Activated naive CD4-positive, alpha-beta T cell treated with anti-CD3 and anti-CD28 coated beads for 36 hours (primary cell): ENCODE measurements at regions of chr4 and their contacts with region 1.

Region 1: GRCh38 chr4:152535903-152536544 is at the start of gene FBXW7:
- DNase-seq: peak; percentile 100
- H3K4me3 Mint-ChIP-seq: peak within 1 kb of the TSS; percentile 87
- H3K27ac Mint-ChIP-seq: peak within 1 kb of the TSS; percentile 97
- H3K4me1 Mint-ChIP-seq: peaks cover 56% of the 10 kb centered on the region
- H3K27me3 Mint-ChIP-seq: no peaks in the 10 kb centered on the region
- total RNA-seq, gene FBXW7: 26.7 to 29.2 TPM

Region 2: GRCh38 chr4:151760712-151761527 is 775.1 kb before region 1 on chr4 and contains the start of gene GATB:
- CTCF ChIA-PET with region 1: no interaction called
- intact Hi-C with region 1: loop called (anchors 1 kb)
- DNase-seq: peak; percentile 95
- H3K4me3 Mint-ChIP-seq: peak within 1 kb of the TSS; percentile 99
- H3K27ac Mint-ChIP-seq: peak within 1 kb of the TSS; percentile 89
- H3K4me1 Mint-ChIP-seq: peaks cover 13% of the 10 kb centered on the region
- H3K27me3 Mint-ChIP-seq: no peaks in the 10 kb centered on the region
- total RNA-seq, gene GATB: 15.2 to 22.1 TPM

Region 3: GRCh38 chr4:152278505-152279233 is 257.4 kb before region 1 on chr4:
- CTCF ChIA-PET with region 1: no interaction called
- intact Hi-C with region 1: no loop called
- DNase-seq: peak; percentile 31
- H3K4me3 Mint-ChIP-seq: no peak overlapping the region
- H3K27ac Mint-ChIP-seq: no peak overlapping the region
- H3K4me1 Mint-ChIP-seq: peaks cover 27% of the 10 kb centered on the region
- H3K27me3 Mint-ChIP-seq: no peaks in the 10 kb centered on the region

Region 4: DNA sequence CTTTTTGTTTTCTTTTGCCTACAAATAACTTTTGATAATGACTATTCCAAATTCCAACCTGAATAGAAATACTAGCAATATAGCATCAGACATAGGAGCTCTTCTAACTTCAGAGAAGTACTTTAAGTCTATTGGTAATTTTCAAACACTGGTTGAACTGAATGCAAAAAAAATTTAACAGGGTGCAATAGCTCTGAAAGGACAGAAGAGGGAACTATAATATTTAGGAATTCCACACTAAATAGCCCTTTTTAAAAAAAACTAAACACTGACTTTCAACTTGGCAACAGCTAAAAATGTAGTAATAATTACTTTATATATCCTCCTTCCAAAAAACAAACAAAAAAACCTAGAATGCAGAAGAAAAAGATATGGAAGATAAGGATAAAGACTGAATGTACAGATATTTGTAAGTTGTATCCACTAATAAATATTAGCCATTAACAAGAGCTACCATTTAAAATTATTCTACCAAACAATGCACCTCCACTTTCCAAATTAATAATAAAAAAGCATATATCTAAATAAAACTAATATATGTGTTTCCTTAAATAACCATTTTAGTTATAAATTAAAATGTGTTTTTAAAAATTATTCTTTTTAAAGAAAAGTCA is 81.5 kb before region 1 on chr4:
- CTCF ChIA-PET with region 1: interaction called, 3 read pairs
- intact Hi-C with region 1: loop called (anchors 1 kb)
- DNase-seq: no peak
- H3K4me3 Mint-ChIP-seq: no peak overlapping the region
- H3K27ac Mint-ChIP-seq: no peak overlapping the region
- H3K4me1 Mint-ChIP-seq: peaks cover 32% of the 10 kb centered on the region
- H3K27me3 Mint-ChIP-seq: no peaks in the 10 kb centered on the region

Region 5: DNA sequence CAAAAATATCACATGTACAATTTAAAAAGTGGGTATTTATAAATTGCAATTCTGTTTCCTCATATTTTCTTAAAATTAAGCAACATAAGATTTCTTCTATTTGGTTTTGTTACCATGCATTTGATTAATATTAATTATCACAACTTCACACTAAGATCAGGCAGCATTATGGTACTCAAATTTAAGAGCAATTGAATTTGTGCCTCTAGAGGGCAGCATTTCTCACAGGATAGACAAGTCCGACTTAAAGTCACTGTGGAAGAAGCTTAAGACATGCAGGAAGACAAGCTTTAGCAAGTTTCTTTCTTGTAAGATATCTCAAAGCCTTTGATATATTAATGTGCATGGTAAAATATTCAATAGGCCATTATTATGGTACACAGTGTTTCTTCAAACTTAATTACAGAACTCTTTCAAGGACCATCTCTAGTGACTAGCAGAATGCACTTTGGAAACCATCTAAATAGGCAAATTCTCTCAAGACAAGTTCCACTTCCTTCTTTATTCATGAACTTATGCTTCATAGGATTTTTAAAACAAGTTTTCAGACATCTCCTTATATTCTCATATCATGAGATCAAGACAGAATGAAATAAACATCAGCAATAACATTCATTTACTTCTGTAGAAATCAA is 35.1 kb before region 1 on chr4:
- CTCF ChIA-PET with region 1: interaction called, 7 read pairs
- intact Hi-C with region 1: loop called (anchors 1 kb)
- DNase-seq: peak; percentile 79
- H3K4me3 Mint-ChIP-seq: no peak overlapping the region
- H3K27ac Mint-ChIP-seq: no peak overlapping the region
- H3K4me1 Mint-ChIP-seq: peaks cover 15% of the 10 kb centered on the region
- H3K27me3 Mint-ChIP-seq: no peaks in the 10 kb centered on the region

Region 6: GRCh38 chr4:152559641-152560040 is 23.6 kb after region 1 on chr4:
- CTCF ChIA-PET with region 1: interaction called, 10 read pairs
- intact Hi-C with region 1: loop called (anchors 1 kb)
- DNase-seq: no peak
- H3K4me3 Mint-ChIP-seq: no peak overlapping the region
- H3K27ac Mint-ChIP-seq: no peak overlapping the region
- H3K4me1 Mint-ChIP-seq: peaks cover 15% of the 10 kb centered on the region
- H3K27me3 Mint-ChIP-seq: no peaks in the 10 kb centered on the region

Region 7: DNA sequence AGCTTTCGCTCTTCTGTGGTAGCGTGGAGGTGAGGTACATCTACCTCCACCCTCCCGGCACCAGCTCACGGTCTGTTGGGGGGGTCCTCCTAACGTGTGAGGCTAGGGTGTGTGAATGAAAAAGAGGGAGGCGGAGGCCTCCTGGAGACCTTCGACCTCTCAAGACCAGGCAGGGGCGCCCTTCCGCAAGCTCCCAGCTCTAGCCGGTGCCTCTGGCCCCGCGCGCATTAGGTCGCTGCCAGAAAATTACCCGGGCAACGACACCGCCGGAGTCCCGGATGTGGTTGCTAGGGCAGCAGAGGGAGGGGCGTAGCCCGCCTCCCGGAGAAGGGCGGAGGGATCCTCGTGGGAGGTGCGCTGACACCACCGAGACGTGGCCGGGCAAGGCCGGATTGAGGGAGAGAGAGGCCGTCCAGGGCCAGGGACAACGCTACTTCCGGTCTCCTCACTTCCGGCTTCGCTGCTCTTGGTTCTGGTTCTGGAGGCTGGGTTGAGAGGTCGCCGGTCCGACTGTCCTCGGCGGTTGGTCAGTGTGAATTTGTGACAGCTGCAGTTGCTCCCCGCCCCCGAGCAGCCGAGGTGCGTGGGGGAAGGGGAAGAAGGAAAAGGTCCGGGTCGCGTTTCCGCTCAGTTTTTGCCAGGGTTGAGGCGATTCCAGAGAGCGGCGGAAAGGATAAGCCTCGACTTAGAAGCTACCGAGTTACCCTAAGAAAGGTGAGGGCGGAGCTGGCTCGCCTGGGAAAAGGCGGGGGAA is 243.7 kb after region 1 on chr4 and contains the starts of genes ARFIP1 and TIGD4:
- CTCF ChIA-PET with region 1: interaction called, 4 read pairs
- intact Hi-C with region 1: loop called (anchors 1 kb)
- DNase-seq: peak; percentile 97
- H3K4me3 Mint-ChIP-seq: peak within 1 kb of the TSS; percentile 91
- H3K27ac Mint-ChIP-seq: peak within 1 kb of the TSS; percentile 75
- H3K4me1 Mint-ChIP-seq: peaks cover 23% of the 10 kb centered on the region
- H3K27me3 Mint-ChIP-seq: peaks cover 4% of the 10 kb centered on the region
- total RNA-seq, gene ARFIP1: 5.0 to 5.1 TPM
- total RNA-seq, gene TIGD4: 0.07 to 0.27 TPM

Region 8: DNA sequence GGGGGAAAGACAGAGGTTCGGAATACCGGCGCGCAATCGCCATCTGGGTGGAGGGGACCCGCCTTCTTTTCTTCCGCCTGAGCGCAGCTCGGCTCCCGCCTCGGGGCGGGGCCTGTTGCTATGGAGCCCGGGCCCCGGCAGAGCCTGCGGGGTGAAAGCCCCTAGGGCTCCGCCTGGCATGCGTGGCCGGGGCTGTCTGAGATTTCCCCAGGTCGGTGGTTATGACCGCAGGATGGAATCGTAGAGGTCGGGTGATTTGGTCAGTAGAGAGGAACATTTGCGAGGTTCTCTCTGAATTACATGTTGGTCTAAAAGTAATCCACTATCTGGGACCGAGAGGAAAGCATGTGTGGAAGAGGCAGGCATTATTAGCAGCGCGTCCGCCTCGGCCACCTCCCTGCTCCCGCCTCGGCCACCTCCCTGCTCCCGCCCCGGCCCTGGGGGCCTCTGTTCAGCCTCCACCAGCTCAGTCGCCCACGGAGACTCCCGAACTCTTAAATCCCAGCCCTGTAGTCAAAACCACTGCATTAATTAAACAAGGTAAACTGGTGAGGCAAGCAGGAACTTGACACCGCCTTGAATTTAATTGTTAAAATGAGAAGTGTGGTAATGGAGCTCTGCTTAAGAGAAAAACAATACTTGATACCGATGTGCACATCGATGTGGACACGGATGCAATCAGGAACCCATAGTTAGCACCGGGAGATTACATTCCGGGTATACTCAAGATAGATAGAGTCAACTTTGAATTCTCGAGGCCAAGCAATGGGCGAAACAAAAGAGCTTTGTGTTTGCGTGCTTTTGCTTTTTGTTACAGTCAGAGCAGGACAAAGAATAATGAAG is 713.4 kb after region 1 on chr4:
- CTCF ChIA-PET with region 1: no interaction called
- intact Hi-C with region 1: loop called (anchors 5 kb)
- DNase-seq: peak; percentile 91
- H3K4me3 Mint-ChIP-seq: peak overlapping the region; percentile 83
- H3K27ac Mint-ChIP-seq: peak overlapping the region; percentile 91
- H3K4me1 Mint-ChIP-seq: peaks cover 27% of the 10 kb centered on the region
- H3K27me3 Mint-ChIP-seq: no peaks in the 10 kb centered on the region